ENCODE measurements at regions of chr2 and their contacts with region 1.

Region 1: DNA sequence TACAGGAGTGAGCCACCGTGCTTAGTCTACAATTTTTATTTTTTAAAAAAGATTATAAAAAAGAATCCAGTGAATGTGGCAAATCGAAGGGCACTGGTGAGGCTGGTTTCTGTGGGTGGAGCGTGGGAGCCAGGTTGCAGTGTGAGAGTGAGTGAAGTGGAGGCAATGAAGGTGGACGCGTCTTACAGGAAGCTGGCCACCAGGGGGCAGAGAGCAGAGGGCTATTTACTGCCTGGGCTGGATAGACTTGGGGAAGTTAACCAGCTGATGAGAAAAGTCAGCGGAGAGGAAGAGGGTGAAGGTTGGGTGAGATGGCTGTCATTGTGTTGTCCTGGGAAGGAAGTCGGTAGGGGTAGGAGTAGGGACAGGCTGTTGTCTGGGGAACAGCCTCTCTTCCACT is 6.8 kb downstream of the SCTR start:
- DNase-seq: no peak
- ATAC-seq: peak; percentile 98
- H3K4me3 ChIP-seq: no peak overlapping the region
- H3K27ac ChIP-seq: no peak overlapping the region
- H3K4me1 ChIP-seq: no peaks in the 10 kb centered on the region; the same call in 1 of the 2 replicates
- H3K27me3 ChIP-seq: peaks cover 0 to under 1% of the 10 kb centered on the region in 2 experiments; a peak in 2 of 4 replicates
- CTCF ChIP-seq: peak; percentile 61 to 80 (median 79)
- EP300 ChIP-seq: no peak
- POLR2A ChIP-seq: no peak
- RAD21 ChIP-seq: peak; percentile 53

Region 2: DNA sequence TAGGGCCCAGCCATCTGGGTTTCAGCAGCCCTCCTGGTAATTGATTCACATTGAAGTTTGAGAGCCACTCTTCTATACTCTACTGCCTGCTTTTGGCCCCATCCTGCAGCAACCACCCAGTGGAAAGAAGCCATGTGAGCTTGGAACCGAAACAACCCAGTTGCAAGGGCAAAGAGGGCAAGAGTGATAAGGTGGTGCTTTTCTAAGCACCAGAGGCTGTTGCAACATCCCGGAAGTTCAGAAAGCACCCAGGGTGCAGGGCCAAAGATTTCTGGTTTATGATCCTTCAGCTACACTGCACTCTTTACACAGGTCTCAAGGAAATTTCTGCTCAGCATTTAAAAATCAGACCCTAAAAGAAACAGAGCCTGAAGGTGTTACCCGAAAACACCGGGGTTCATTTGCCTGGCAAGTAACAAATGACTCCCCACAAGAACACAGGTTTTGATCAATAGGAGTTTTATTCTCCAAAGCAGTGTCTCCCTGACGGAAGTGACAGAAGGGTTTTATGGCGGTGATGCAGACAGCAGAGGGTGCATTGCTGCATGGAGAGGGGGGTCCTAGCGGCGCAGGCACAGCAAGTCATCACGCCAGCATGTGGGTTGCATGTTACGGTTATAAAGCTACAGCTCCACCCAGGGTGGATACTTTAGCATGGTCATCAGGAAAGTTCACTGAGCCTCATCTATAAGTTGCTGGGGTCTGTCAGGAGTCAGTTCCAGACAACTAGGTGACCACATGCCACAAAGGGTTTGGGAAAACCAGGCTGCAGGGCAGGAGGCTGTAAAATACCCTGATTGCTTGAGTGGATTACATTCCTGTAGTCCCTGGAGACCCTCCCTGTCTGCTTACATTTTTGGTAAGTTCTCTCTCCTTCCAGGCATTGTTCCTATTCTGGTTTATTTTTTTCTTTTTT is 114.5 kb before region 1 on chr2:
- CTCF ChIA-PET with region 1: no interaction called
- POLR2A ChIA-PET with region 1: no interaction called
- RAD21 ChIA-PET with region 1: no interaction called
- SMC1A ChIA-PET with region 1: no interaction called
- in situ Hi-C with region 1: no loop called
- intact Hi-C with region 1: no loop called
- DNase-seq: no peak
- ATAC-seq: peak; percentile 30; the same call in 2 of the 3 replicates
- H3K4me3 ChIP-seq: no peak overlapping the region
- H3K27ac ChIP-seq: no peak overlapping the region
- H3K4me1 ChIP-seq: no peaks in the 10 kb centered on the region
- H3K27me3 ChIP-seq: no peaks in the 10 kb centered on the region
- CTCF ChIP-seq: no peak
- EP300 ChIP-seq: no peak
- POLR2A ChIP-seq: no peak
- RAD21 ChIP-seq: no peak

Region 3: GRCh38 chr2:119474371-119475224 is 42.8 kb before region 1 on chr2:
- CTCF ChIA-PET with region 1: no interaction called
- POLR2A ChIA-PET with region 1: no interaction called
- RAD21 ChIA-PET with region 1: no interaction called
- SMC1A ChIA-PET with region 1: no interaction called
- in situ Hi-C with region 1: no loop called
- intact Hi-C with region 1: no loop called
- DNase-seq: no peak
- ATAC-seq: no peak
- H3K4me3 ChIP-seq: no peak overlapping the region
- H3K27ac ChIP-seq: no peak overlapping the region
- H3K4me1 ChIP-seq: no peaks in the 10 kb centered on the region
- H3K27me3 ChIP-seq: no peaks in the 10 kb centered on the region
- CTCF ChIP-seq: no peak
- EP300 ChIP-seq: no peak
- POLR2A ChIP-seq: no peak
- RAD21 ChIP-seq: no peak

Region 4: DNA sequence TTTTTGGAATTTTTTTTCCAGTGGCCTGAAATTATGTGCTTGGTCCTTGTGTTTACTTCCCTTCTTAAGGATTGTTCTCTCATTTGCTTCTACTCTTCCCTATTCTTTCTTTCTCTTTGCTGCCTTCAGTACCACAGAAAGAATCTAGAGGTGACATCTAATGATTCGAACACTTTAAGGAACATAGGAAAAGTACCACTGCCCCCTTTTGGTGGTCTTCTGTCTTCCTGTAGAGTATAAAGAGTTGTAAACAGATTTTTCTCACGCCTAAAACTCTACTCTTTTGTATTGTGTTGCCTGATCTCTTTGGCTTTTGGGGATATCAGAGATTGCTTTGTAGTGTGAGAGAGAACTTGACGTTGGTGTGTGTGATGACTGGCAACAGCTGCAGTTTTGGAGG is 13.9 kb after region 1 on chr2:
- CTCF ChIA-PET with region 1: interaction called, 13 read pairs
- POLR2A ChIA-PET with region 1: no interaction called
- RAD21 ChIA-PET with region 1: no interaction called
- SMC1A ChIA-PET with region 1: no interaction called
- in situ Hi-C with region 1: no loop called
- intact Hi-C with region 1: no loop called
- DNase-seq: no peak
- ATAC-seq: no peak
- H3K4me3 ChIP-seq: no peak overlapping the region
- H3K27ac ChIP-seq: no peak overlapping the region
- H3K4me1 ChIP-seq: no peaks in the 10 kb centered on the region
- H3K27me3 ChIP-seq: no peaks in the 10 kb centered on the region
- CTCF ChIP-seq: no peak
- EP300 ChIP-seq: no peak
- POLR2A ChIP-seq: no peak
- RAD21 ChIP-seq: no peak

Measured in GM12878 (cell line).